ENCODE measurements at regions of chr6 and their contacts with region 1.

Region 1: GRCh38 chr6:17032988-17033634 is 68.7 kb upstream of the STMND1 start:
- DNase-seq: peak; percentile 95
- ATAC-seq: peak; percentile 74
- H3K4me3 ChIP-seq: peak overlapping the region; percentile 35; the same call in 1 of the 2 replicates
- H3K27ac ChIP-seq: peak overlapping the region; percentile 43; the same call in 1 of the 2 replicates
- H3K4me1 ChIP-seq: peaks cover 7% of the 10 kb centered on the region
- H3K27me3 ChIP-seq: no peaks in the 10 kb centered on the region
- CTCF ChIP-seq: no peak
- POLR2A ChIP-seq: no peak
- RAD21 ChIP-seq: no peak

Region 2: GRCh38 chr6:16741112-16742016 is 291.7 kb before region 1 on chr6:
- CTCF ChIA-PET with region 1: no interaction called
- POLR2A ChIA-PET with region 1: no interaction called
- dilution Hi-C with region 1: no loop called
- in situ Hi-C with region 1: no loop called
- intact Hi-C with region 1: no loop called
- DNase-seq: peak; percentile 98
- ATAC-seq: peak; percentile 88
- H3K4me3 ChIP-seq: peak overlapping the region; percentile 27; the same call in 1 of the 2 replicates
- H3K27ac ChIP-seq: no peak overlapping the region; the same call in 1 of the 2 replicates
- H3K4me1 ChIP-seq: peaks cover 22% of the 10 kb centered on the region
- H3K27me3 ChIP-seq: no peaks in the 10 kb centered on the region
- CTCF ChIP-seq: no peak
- POLR2A ChIP-seq: peak; percentile 68; the same call in 1 of the 2 replicates
- RAD21 ChIP-seq: no peak

Region 3: DNA sequence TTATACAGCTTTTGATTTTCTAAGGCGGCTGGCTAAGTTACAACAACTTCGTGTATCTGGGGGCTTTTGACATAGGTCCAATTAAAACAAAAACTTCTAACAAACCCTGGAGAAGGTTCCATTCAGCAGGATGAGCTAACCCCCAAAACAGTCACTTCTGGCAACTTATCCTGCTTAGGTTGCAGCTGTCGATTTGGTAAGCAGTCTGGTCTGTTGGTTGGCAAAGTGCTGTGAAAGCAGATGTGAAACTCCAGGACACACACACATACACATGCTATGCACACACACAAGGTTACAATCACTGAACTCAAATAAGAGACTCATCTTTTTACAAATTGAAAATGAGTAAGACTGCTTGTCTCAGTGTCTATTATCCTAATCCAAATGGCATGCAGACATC is 50.3 kb before region 1 on chr6:
- CTCF ChIA-PET with region 1: interaction called, 3 read pairs
- POLR2A ChIA-PET with region 1: no interaction called
- dilution Hi-C with region 1: no loop called
- in situ Hi-C with region 1: no loop called
- intact Hi-C with region 1: loop called (anchors 10 kb)
- DNase-seq: peak; percentile 99
- ATAC-seq: peak; percentile 64
- H3K4me3 ChIP-seq: no peak overlapping the region
- H3K27ac ChIP-seq: no peak overlapping the region
- H3K4me1 ChIP-seq: peaks cover 7% of the 10 kb centered on the region
- H3K27me3 ChIP-seq: peaks cover 5% of the 10 kb centered on the region; the same call in 1 of the 2 replicates
- CTCF ChIP-seq: no peak
- POLR2A ChIP-seq: no peak
- RAD21 ChIP-seq: no peak

Region 4: DNA sequence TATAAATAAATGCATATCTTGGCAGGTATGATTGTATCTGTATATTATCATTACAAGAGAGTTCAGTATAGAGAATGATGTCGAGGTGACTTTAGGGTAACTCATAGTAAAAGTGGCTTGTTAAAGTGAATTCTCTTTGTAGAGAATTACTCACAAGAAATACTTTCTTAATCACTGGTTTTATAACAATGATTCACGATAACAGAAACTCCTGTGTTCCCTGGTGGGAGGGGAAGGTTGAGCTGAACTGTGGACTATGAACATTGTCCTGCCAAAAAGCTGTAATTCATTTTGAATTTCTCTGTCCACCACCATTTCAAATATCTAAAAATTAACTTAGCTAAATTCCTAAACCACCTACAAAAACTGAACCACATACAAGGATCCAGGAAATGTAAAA is 1114.0 kb after region 1 on chr6:
- CTCF ChIA-PET with region 1: no interaction called
- POLR2A ChIA-PET with region 1: no interaction called
- dilution Hi-C with region 1: no loop called
- in situ Hi-C with region 1: no loop called
- intact Hi-C with region 1: no loop called
- DNase-seq: peak; percentile 66
- ATAC-seq: peak; percentile 51
- H3K4me3 ChIP-seq: no peak overlapping the region
- H3K27ac ChIP-seq: no peak overlapping the region
- H3K4me1 ChIP-seq: no peaks in the 10 kb centered on the region; the same call in 1 of the 2 replicates
- H3K27me3 ChIP-seq: no peaks in the 10 kb centered on the region
- CTCF ChIP-seq: no peak
- POLR2A ChIP-seq: no peak
- RAD21 ChIP-seq: no peak